Endothelial cell of umbilical vein (primary cell): ENCODE measurements at regions of chr6 and their contacts with region 1.

Region 1: GRCh38 chr6:5143634-5144311 is 58.6 kb downstream of the PPP1R3G start:
- DNase-seq: peak; percentile 82
- H3K4me3 ChIP-seq: no peak overlapping the region
- H3K27ac ChIP-seq: no peak overlapping the region
- H3K4me1 ChIP-seq: no peaks in the 10 kb centered on the region
- H3K27me3 ChIP-seq: no peaks in the 10 kb centered on the region
- CTCF ChIP-seq: peak; percentile 84 to 87
- POLR2A ChIP-seq: no peak

Region 2: DNA sequence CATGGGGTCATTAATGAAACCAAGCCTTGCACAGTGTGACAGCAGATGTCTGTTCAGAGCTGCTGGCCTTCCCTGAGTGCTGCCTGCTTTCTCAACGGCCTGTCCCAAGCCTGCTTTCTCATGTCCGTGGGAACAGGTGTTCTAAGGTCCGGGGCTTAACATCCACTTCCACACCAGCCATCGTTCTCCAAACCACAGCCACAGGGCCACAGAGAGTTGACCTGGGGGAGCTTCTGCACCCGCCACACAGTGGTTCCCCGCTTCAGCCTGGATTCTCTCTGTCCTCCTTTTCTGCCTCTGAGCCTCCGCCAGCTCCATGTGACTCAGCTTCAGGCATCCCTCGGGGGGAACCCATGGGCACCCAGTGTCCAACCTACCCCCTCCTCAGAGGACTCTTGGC is 85.5 kb before region 1 on chr6:
- CTCF ChIA-PET with region 1: interaction called, 15 read pairs
- POLR2A ChIA-PET with region 1: no interaction called
- dilution Hi-C with region 1: no loop called
- intact Hi-C with region 1: no loop called
- DNase-seq: no peak
- H3K4me3 ChIP-seq: no peak overlapping the region
- H3K27ac ChIP-seq: no peak overlapping the region
- H3K4me1 ChIP-seq: peaks cover 17% of the 10 kb centered on the region
- H3K27me3 ChIP-seq: no peaks in the 10 kb centered on the region
- CTCF ChIP-seq: no peak
- POLR2A ChIP-seq: no peak

Region 3: DNA sequence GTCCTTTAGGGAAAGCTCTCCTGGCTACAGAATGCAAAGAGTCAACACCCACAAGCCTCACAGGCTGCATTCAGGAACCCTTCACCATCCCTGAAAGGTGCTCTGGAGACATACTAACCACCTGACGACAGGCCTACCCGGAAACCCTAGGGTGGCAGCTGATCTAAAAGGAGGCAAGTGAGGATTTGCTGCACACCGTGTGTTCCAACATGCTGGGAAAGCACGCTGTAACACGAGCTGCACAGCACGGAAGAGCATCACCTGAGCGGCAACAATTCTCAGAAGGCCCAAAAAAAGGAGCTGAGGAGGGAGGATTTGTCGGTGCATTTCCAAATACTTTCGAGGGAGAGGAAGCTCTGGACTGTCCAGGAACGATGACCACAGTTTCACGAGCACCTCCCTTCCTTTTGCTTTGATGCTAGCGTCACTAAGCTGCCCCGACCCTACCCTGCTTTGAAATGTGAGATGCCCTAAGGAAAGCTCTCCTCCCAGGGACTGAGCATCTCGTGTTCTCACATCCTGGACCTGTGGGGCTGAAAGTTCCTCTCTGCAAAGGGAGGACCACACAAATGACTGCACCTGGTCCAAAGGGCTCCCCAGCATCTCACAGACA is 28.4 kb after region 1 on chr6:
- CTCF ChIA-PET with region 1: interaction called, 11 read pairs
- POLR2A ChIA-PET with region 1: no interaction called
- dilution Hi-C with region 1: no loop called
- intact Hi-C with region 1: no loop called
- DNase-seq: no peak
- H3K4me3 ChIP-seq: no peak overlapping the region
- H3K27ac ChIP-seq: no peak overlapping the region
- H3K4me1 ChIP-seq: no peaks in the 10 kb centered on the region
- H3K27me3 ChIP-seq: no peaks in the 10 kb centered on the region
- CTCF ChIP-seq: no peak
- POLR2A ChIP-seq: no peak

Region 4: DNA sequence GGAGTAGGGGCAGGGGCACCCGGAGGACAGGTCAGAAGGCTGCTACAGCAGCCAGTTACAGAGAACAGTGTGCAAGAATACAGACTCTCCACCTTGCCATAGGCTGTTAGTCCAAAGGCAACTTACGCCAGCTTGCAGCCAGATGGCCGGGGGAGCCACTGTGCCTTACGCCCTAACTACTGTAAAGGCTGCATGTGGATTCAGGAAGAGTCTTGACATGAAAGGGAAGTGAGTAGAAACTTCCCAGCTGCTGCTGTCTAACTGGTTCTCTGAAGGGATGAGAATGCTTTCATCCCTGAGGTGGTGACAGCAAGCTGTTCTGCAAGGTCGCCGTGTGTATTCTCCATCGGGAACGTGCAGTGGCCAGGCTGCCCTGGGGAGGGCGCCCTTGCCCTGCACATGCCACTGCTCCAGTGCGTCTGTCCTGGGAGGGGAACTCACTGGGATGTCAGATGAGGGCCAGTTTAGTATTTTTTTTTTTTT is 70.8 kb after region 1 on chr6:
- CTCF ChIA-PET with region 1: interaction called, 20 read pairs
- POLR2A ChIA-PET with region 1: no interaction called
- dilution Hi-C with region 1: no loop called
- intact Hi-C with region 1: loop called (anchors 1 kb)
- DNase-seq: peak; percentile 46
- H3K4me3 ChIP-seq: no peak overlapping the region
- H3K27ac ChIP-seq: no peak overlapping the region
- H3K4me1 ChIP-seq: peaks cover 5% of the 10 kb centered on the region
- H3K27me3 ChIP-seq: no peaks in the 10 kb centered on the region
- CTCF ChIP-seq: peak; percentile 75 to 76
- POLR2A ChIP-seq: no peak

Region 5: GRCh38 chr6:5266423-5266822 is 122.7 kb after region 1 on chr6:
- CTCF ChIA-PET with region 1: interaction called, 14 read pairs
- POLR2A ChIA-PET with region 1: no interaction called
- dilution Hi-C with region 1: no loop called
- intact Hi-C with region 1: loop called (anchors 1 kb)
- DNase-seq: no peak
- H3K4me3 ChIP-seq: no peak overlapping the region
- H3K27ac ChIP-seq: no peak overlapping the region
- H3K4me1 ChIP-seq: peaks cover 4% of the 10 kb centered on the region
- H3K27me3 ChIP-seq: no peaks in the 10 kb centered on the region
- CTCF ChIP-seq: no peak
- POLR2A ChIP-seq: no peak

Region 6: GRCh38 chr6:5379647-5380242 is 236.0 kb after region 1 on chr6:
- CTCF ChIA-PET with region 1: interaction called, 173 read pairs
- POLR2A ChIA-PET with region 1: no interaction called
- dilution Hi-C with region 1: no loop called
- intact Hi-C with region 1: loop called (anchors 1 kb)
- DNase-seq: peak; percentile 71
- H3K4me3 ChIP-seq: no peak overlapping the region
- H3K27ac ChIP-seq: no peak overlapping the region
- H3K4me1 ChIP-seq: no peaks in the 10 kb centered on the region
- H3K27me3 ChIP-seq: no peaks in the 10 kb centered on the region
- CTCF ChIP-seq: peak; percentile 68 to 77
- POLR2A ChIP-seq: no peak

Region 7: GRCh38 chr6:5490500-5491069 is 346.8 kb after region 1 on chr6:
- CTCF ChIA-PET with region 1: no interaction called
- POLR2A ChIA-PET with region 1: no interaction called
- dilution Hi-C with region 1: no loop called
- intact Hi-C with region 1: no loop called
- DNase-seq: no peak
- H3K4me3 ChIP-seq: no peak overlapping the region
- H3K27ac ChIP-seq: no peak overlapping the region
- H3K4me1 ChIP-seq: no peaks in the 10 kb centered on the region
- H3K27me3 ChIP-seq: no peaks in the 10 kb centered on the region
- CTCF ChIP-seq: no peak
- POLR2A ChIP-seq: no peak